ENCODE measurements at regions of chr7 and their contacts with region 1.

Region 1: GRCh38 chr7:35828817-35829216 is 28.0 kb downstream of the SEPTIN7 start:
- DNase-seq: no peak
- ATAC-seq: peak in 3 of 4 donors; percentile 67 to 70 (median 69)
- H3K4me3 ChIP-seq: no peak overlapping the region
- H3K27ac ChIP-seq: no peak overlapping the region
- H3K4me1 ChIP-seq: peaks cover 5 to 97% (median 75%) of the 10 kb centered on the region in 12 donors
- H3K27me3 ChIP-seq: no peaks in the 10 kb centered on the region
- CTCF ChIP-seq: no peak
- POLR2A ChIP-seq: no peak

Region 2: DNA sequence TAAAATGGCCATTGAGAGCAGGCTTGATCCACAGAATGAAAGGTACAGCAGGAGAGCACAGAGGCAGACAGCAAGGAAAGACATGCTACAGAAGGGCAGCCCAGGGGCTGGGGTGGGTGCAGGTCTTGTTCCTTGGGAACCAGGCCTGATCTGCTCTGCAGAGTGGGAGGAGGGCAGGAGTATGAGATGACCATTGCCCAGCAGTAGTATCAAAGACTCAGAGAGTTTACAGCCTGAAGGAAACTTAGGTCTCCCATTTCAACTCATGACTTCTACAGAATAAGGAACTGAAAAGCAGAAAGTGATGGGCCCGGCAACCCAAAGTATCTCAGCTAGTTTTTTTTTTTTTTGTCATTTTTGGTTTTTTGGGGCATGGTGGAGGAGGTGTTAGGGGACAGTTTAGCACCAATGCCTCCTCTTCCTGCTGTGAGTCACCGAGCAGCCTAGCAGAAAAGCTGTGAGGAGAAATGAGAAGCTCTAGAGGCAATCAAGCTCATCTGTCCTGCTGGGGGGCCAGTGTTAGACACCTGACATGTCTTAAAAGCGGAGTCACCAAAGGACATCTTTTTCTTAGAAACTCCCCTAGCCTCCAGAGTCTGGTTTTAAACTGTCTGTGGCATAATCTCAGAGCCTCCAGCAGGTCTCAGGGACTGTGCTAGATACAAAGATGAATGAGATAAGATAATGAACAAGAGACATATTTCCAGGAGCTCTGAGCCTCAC is 99.6 kb before region 1 on chr7:
- intact Hi-C with region 1: no loop called
- DNase-seq: no peak
- ATAC-seq: peak in 2 of 4 donors; percentile 45 to 49
- H3K4me3 ChIP-seq: no peak overlapping the region
- H3K27ac ChIP-seq: peak overlapping the region; percentile 50 to 92 (median 84)
- H3K4me1 ChIP-seq: peaks cover 0 to 45% (median 28%) of the 10 kb centered on the region in 12 donors
- H3K27me3 ChIP-seq: no peaks in the 10 kb centered on the region
- CTCF ChIP-seq: no peak
- POLR2A ChIP-seq: no peak

Region 3: GRCh38 chr7:35761871-35762677 is 66.7 kb before region 1 on chr7:
- intact Hi-C with region 1: loop called in 1 of 10 experiments (anchors 2 kb)
- DNase-seq: no peak
- ATAC-seq: peak in 3 of 4 donors; percentile 51 to 65 (median 54)
- H3K4me3 ChIP-seq: no peak overlapping the region
- H3K27ac ChIP-seq: peak overlapping the region in 10 of 12 donors; percentile 27 to 74 (median 53)
- H3K4me1 ChIP-seq: peaks cover 0 to 50% (median 16%) of the 10 kb centered on the region in 12 donors
- H3K27me3 ChIP-seq: no peaks in the 10 kb centered on the region
- CTCF ChIP-seq: no peak
- POLR2A ChIP-seq: no peak

Region 4: GRCh38 chr7:35869810-35870209 is 41.0 kb after region 1 on chr7:
- intact Hi-C with region 1: loop called in 1 of 10 experiments (anchors 10 kb)
- DNase-seq: peak in 1 of 5 donors; percentile 30
- ATAC-seq: peak in 2 of 4 donors; percentile 60 to 77
- H3K4me3 ChIP-seq: no peak overlapping the region
- H3K27ac ChIP-seq: peak overlapping the region in 8 of 12 donors; percentile 5 to 74 (median 35)
- H3K4me1 ChIP-seq: peaks cover 0 to 61% (median 33%) of the 10 kb centered on the region in 12 donors
- H3K27me3 ChIP-seq: no peaks in the 10 kb centered on the region
- CTCF ChIP-seq: no peak
- POLR2A ChIP-seq: no peak

Measured in heart left ventricle (tissue), 16 donors.